ENCODE measurements at regions of chr5 and their contacts with region 1.

Region 1: DNA sequence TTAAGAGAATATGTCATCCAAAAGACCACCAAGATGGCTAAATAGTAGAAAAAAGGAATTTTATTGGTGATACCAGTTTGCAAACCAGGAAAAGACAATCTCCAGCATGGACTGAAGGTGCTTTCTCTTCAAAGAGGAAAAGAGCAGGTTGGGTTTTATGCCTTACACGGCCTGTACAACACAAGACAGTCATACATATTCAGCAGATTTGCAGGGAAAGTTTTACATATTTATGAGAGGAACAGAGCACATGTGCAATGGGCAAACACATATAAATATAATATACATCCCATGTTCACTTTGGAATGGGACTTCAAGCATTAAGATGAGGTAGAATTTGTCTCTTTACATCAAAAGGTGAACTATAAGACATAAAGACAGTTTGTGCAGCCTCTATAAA is 70.3 kb upstream of the PPP2CA start:
- DNase-seq: no peak
- H3K4me3 ChIP-seq: no peak overlapping the region
- H3K4me3 Mint-ChIP-seq: no peak overlapping the region
- H3K27ac Mint-ChIP-seq: peak overlapping the region; percentile 42
- H3K4me1 ChIP-seq: peaks cover 16% of the 10 kb centered on the region
- H3K4me1 Mint-ChIP-seq: peaks cover 19% of the 10 kb centered on the region
- H3K27me3 ChIP-seq: no peaks in the 10 kb centered on the region
- H3K27me3 Mint-ChIP-seq: no peaks in the 10 kb centered on the region
- CTCF ChIP-seq: no peak

Region 2: DNA sequence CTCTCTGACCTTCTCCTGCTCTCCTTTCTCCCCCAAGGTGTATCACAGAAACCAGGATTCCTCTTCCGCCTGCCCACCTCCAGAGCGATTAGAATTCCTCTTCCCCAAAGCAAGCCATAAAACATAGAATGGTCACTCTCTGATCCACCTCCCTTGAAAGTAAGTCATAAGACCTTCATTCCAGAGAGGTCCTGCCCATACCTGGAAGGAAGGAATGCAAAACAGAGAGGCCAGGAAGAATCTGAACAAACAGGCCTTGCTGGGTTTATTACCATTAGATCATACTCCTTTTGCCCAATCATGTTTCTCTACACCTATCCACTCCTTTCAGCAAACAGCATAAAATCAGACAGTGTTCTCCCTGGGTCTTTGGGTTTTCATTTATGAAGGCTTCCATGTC is 49.8 kb after region 1 on chr5:
- CTCF ChIA-PET with region 1: no interaction called
- POLR2A ChIA-PET with region 1: no interaction called
- intact Hi-C with region 1: loop called (anchors 1 kb)
- DNase-seq: peak; percentile 90
- H3K4me3 ChIP-seq: no peak overlapping the region
- H3K4me3 Mint-ChIP-seq: peak overlapping the region; percentile 25
- H3K27ac Mint-ChIP-seq: peak overlapping the region; percentile 79
- H3K4me1 ChIP-seq: peaks cover 38% of the 10 kb centered on the region
- H3K4me1 Mint-ChIP-seq: peaks cover 20% of the 10 kb centered on the region
- H3K27me3 ChIP-seq: no peaks in the 10 kb centered on the region
- H3K27me3 Mint-ChIP-seq: no peaks in the 10 kb centered on the region
- CTCF ChIP-seq: no peak

Region 3: GRCh38 chr5:134609232-134609851 is 313.1 kb after region 1 on chr5:
- CTCF ChIA-PET with region 1: no interaction called
- POLR2A ChIA-PET with region 1: no interaction called
- intact Hi-C with region 1: no loop called
- DNase-seq: peak in 1 of 2 experiments; percentile 50
- H3K4me3 ChIP-seq: no peak overlapping the region
- H3K4me3 Mint-ChIP-seq: no peak overlapping the region
- H3K27ac Mint-ChIP-seq: peak overlapping the region; percentile 78
- H3K4me1 ChIP-seq: peaks cover 13% of the 10 kb centered on the region
- H3K4me1 Mint-ChIP-seq: peaks cover 16% of the 10 kb centered on the region
- H3K27me3 ChIP-seq: no peaks in the 10 kb centered on the region
- H3K27me3 Mint-ChIP-seq: no peaks in the 10 kb centered on the region
- CTCF ChIP-seq: no peak

Measured in Caco-2 (cell line).